ENCODE measurements at regions of chr3 and their contacts with region 1.

Region 1: DNA sequence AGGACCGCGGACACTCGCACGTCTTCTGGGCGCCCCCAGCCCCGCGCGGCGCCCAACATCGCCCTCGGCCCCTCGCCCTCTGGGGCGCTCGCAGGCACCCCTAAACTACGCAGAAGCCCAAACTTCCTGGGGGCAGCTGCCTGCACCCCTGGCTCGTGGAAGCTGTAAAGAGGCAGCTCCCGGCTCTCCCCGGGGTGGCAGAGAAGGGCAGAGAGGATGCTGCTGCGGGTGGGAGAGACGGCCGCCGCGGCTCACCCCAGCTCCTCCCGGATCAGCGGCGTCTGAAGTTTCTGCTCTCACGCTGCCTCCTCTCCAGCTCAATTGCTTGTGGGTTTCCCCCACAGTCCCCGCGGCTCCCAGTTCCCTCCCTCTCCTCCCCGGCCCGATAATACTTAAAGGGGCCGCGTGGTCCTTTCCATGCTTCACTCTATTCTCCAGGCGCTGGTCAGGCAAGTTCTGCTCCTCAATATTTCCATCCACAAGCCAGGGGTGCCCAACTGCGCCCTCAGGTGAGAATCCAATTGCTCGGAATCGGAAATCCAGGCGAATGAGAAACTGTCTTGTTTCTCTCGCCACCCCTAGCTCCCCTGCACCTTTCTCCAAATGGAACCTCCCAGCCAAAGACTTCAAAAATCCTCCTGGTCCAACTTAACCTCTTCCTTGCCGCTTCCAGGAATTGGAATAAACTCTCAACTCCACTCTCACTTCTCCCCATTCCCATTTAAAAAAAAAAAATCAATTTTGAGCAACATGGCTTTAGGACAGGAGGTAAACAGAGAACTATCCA is 748.5 kb downstream of the ROBO1 start:
- DNase-seq: peak; percentile 76

Region 2: DNA sequence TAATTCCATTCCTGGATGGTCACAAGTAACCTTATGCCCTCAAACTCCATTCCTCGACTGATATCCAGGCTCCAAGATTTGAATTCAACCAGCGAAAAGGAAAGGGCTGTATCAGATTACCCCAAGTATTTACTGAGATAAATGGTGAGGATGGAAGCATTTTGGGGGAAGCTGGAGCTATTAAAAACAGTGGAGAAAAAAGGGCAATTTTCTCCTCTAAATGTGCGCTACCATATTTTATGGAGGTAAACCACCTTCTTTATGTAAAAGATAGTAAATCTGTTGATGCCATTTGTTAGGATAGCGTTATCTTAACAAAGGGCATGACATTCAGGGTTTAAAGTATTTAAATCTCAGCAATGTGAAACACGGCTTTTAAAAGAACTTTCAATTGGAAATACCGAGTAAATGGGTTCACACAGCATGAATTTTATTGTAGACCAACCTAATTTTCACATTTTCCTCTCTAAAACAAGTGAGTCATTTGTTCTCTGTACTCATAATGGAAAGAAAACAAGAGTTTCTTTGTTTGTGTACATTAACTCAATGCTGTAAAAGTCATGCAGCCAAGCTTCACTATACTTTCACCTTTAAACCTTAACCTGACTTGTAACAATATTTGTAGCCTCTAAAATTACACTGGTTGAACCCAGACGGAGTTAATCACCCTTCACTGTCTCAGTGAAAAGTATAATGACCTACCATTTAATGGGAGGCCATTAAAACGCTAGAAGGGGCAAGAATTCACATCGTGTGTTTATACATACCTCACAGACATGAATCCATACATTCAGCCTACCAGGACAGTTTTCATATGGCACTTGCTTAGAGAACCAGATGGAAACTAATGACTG is 24.9 kb before region 1 on chr3:
- CTCF ChIA-PET with region 1: interaction called, 4 read pairs
- POLR2A ChIA-PET with region 1: interaction called, 24 read pairs
- DNase-seq: peak; percentile 59